AG04450 (cell line): ENCODE measurements at regions of chr10 and their contacts with region 1.

Region 1: GRCh38 chr10:15901889-15902288 is 41.6 kb upstream of the MINDY3 start:
- DNase-seq: no peak
- H3K4me3 ChIP-seq: no peak overlapping the region
- H3K27ac ChIP-seq: no peak overlapping the region
- H3K27me3 ChIP-seq: no peaks in the 10 kb centered on the region
- CTCF ChIP-seq: no peak

Region 2: GRCh38 chr10:15461353-15462108 is 440.4 kb before region 1 on chr10:
- CTCF ChIA-PET with region 1: no interaction called
- POLR2A ChIA-PET with region 1: no interaction called
- DNase-seq: no peak
- H3K4me3 ChIP-seq: no peak overlapping the region
- H3K27ac ChIP-seq: no peak overlapping the region
- H3K27me3 ChIP-seq: peaks cover 5% of the 10 kb centered on the region
- CTCF ChIP-seq: peak; percentile 36

Region 3: GRCh38 chr10:15879058-15879457 is 22.8 kb before region 1 on chr10:
- CTCF ChIA-PET with region 1: interaction called, 13 read pairs
- POLR2A ChIA-PET with region 1: no interaction called
- DNase-seq: no peak
- H3K4me3 ChIP-seq: no peak overlapping the region
- H3K27ac ChIP-seq: no peak overlapping the region
- H3K27me3 ChIP-seq: peaks cover 3% of the 10 kb centered on the region
- CTCF ChIP-seq: peak; percentile 64

Region 4: GRCh38 chr10:15884447-15884846 is 17.4 kb before region 1 on chr10:
- CTCF ChIA-PET with region 1: interaction called, 18 read pairs
- POLR2A ChIA-PET with region 1: no interaction called
- DNase-seq: no peak
- H3K4me3 ChIP-seq: no peak overlapping the region
- H3K27ac ChIP-seq: no peak overlapping the region
- H3K27me3 ChIP-seq: peaks cover 5% of the 10 kb centered on the region
- CTCF ChIP-seq: no peak

Region 5: DNA sequence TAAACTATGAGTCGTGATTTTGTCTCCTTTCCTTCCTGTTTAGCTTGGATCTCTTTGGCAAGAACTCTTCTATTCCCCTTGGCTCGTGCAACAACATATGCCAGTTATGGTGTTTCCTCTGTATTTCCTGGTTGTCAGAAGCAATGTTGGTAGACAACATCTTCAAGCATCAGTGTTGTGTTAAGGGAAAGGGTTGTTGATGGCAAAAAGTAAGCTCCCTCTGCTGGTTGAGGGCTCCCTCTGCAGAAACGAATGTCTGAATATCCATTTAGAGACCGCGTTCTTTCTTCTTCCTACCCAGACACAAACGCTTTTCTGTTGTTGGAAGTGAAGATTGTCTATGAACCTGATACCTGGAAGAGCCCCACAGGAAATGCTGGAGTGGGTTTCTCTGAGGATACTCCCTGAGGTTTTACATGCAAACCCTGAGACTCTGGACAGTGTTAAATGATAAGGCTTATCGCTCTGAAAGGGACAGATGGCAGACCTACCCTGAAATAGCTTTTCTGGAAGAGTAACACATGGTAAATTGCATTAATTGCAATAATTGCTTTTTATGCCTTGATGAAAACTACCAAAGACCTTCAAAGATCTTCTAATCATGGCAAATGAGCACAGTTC is 643.3 kb after region 1 on chr10:
- CTCF ChIA-PET with region 1: interaction called, 23 read pairs
- POLR2A ChIA-PET with region 1: no interaction called
- DNase-seq: no peak
- H3K4me3 ChIP-seq: no peak overlapping the region
- H3K27ac ChIP-seq: no peak overlapping the region
- H3K27me3 ChIP-seq: no peaks in the 10 kb centered on the region
- CTCF ChIP-seq: peak; percentile 75

Region 6: GRCh38 chr10:16777473-16778370 is 875.8 kb after region 1 on chr10:
- CTCF ChIA-PET with region 1: interaction called, 52 read pairs
- POLR2A ChIA-PET with region 1: no interaction called
- DNase-seq: peak; percentile 32
- H3K4me3 ChIP-seq: no peak overlapping the region
- H3K27ac ChIP-seq: no peak overlapping the region
- H3K27me3 ChIP-seq: no peaks in the 10 kb centered on the region
- CTCF ChIP-seq: peak; percentile 69